ENCODE measurements at regions of chr16 and their contacts with region 1.

Region 1: DNA sequence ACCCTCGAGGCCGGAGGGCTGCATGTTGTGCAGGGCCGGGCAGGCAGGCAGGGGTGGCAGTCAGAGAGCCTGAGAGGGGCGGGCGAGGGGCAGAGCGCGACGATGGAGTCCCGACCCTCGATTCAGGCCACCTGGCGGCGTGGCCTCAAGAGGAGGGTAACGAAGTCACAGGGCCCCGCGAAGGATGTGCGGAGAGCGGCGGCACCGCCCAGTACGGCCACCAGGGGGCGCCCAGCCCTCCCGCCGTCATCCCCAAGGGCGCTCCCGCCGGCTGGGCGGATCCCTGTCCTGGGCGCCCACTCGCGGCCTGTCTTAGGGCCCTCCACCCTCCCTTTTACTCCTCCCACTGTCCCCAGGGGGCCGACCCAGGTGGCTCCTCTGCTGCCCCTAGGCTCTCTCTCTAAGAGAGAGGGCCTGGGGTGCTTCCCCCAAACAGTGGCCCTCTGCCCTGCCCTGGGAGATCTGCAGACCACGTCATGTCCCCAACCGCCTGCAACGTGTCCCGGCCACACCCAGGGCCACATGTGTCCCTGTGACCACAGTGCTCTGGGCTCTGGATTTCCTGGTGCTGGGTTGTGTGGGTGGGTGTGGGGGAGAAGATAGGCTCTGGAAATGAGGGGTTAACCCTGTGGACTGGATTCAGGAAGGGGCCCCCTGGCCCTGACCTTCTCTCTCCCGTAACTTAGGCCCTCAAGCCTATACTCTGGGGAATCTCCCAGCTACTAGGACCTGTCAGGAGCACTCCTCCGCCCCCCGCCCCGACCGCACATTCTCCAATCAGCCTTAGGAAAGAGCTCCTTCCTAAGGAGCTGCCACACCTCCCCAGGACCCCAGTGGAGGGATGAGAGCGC is 5.9 kb downstream of the DPEP2 start:
- DNase-seq: peak; percentile 84 to 88
- ATAC-seq: peak; percentile 91 to 96 (median 95)
- H3K4me3 ChIP-seq: peak overlapping the region in 9 of 10 donors; percentile 5 to 55 (median 45)
- H3K27ac ChIP-seq: peak overlapping the region; percentile 70 to 93 (median 80)
- H3K4me1 ChIP-seq: peaks cover 4 to 33% (median 13%) of the 10 kb centered on the region in 9 donors
- H3K27me3 ChIP-seq: no peaks in the 10 kb centered on the region
- CTCF ChIP-seq: peak; percentile 98 to 100 (median 99)

Region 2: DNA sequence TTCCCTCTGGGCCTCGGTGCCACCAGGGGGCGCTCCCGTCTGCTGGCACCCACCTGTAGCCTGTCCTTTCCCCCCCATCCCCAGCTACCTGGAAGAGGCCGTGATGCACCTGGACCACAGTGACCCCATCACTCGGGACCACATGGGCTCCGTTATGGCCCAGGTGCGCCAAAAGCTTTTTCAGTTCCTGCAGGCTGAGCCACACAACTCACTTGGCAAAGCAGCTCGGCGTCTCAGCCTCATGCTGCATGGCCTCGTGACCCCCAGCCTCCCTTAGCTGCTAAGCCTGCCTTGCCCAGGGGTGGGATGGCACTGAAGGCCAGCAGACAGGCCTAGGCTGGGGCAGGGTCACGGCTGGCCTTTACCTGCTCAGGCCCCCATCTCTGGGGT is 109.5 kb before region 1 on chr16:
- intact Hi-C with region 1: no loop called
- DNase-seq: peak; percentile 36 to 70
- ATAC-seq: peak in 7 of 8 donors; percentile 27 to 75 (median 48)
- H3K4me3 ChIP-seq: no peak overlapping the region
- H3K27ac ChIP-seq: peak overlapping the region in 7 of 10 donors; percentile 18 to 91 (median 80)
- H3K4me1 ChIP-seq: peaks cover 19 to 55% (median 25%) of the 10 kb centered on the region in 9 donors
- H3K27me3 ChIP-seq: no peaks in the 10 kb centered on the region
- CTCF ChIP-seq: peak; percentile 17 to 91 (median 87)

Region 3: GRCh38 chr16:67935402-67936123 is 57.9 kb before region 1 on chr16:
- intact Hi-C with region 1: loop called in 1 of 10 experiments (anchors 5 kb)
- DNase-seq: peak; percentile 92 to 94
- ATAC-seq: peak; percentile 90 to 95 (median 92)
- H3K4me3 ChIP-seq: peak overlapping the region; percentile 70 to 96 (median 86)
- H3K27ac ChIP-seq: peak overlapping the region; percentile 70 to 98 (median 95)
- H3K4me1 ChIP-seq: peaks cover 4 to 40% (median 33%) of the 10 kb centered on the region in 9 donors
- H3K27me3 ChIP-seq: no peaks in the 10 kb centered on the region
- CTCF ChIP-seq: peak in 1 of 9 donors; percentile 5

Region 4: GRCh38 chr16:68005786-68006286 is 12.4 kb after region 1 on chr16:
- intact Hi-C with region 1: no loop called
- DNase-seq: peak in 1 of 2 donors; percentile 33
- ATAC-seq: peak in 7 of 8 donors; percentile 50 to 86 (median 71)
- H3K4me3 ChIP-seq: no peak overlapping the region
- H3K27ac ChIP-seq: peak overlapping the region in 6 of 10 donors; percentile 19 to 93 (median 42)
- H3K4me1 ChIP-seq: peaks cover 0 to 40% (median 0%) of the 10 kb centered on the region in 9 donors
- H3K27me3 ChIP-seq: no peaks in the 10 kb centered on the region
- CTCF ChIP-seq: no peak

Region 5: DNA sequence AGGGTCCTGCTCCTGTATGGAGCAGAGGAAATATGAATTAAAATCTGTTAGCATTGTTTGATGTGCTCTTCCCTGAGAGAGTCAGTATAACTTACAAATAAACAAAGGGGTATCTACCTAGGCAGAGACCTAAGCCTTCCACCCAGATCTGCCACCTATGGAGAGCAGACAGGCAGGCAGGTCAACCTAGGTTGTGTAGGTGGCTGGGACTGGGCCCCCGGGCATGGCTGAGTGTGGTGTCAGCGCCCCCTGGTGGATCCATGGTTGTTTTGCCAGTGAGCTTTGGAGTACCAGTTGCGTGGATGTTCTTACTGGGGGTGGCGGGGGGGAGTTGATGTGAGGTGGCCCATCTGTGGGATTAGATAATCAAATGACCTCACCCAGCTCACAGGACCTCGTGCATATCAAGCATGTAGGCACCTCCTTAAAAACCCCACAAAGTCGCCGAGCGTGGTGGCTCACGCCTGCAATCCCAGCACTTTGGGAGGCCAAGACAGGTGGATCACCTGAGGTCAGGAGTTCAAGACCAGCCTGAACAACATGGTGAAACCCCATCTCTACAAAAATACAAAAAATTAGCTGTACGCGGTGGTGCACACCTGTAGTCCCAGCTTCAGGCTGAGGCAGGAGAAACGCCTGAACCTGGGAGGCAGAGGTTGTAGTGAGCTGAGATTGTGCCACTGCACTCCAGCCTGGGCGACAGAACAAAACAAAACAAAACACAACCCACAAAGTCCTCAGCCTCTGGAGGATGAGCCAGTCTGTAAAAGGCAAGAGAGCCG is 47.3 kb after region 1 on chr16:
- intact Hi-C with region 1: loop called in 5 of 10 experiments (anchors 1 to 5 kb)
- DNase-seq: peak; percentile 83 to 84
- ATAC-seq: peak; percentile 89 to 96 (median 94)
- H3K4me3 ChIP-seq: no peak overlapping the region
- H3K27ac ChIP-seq: peak overlapping the region in 1 of 10 donors; percentile 69
- H3K4me1 ChIP-seq: peaks cover 0 to 45% (median 0%) of the 10 kb centered on the region in 9 donors
- H3K27me3 ChIP-seq: no peaks in the 10 kb centered on the region
- CTCF ChIP-seq: peak; percentile 73 to 88 (median 83)

Region 6: GRCh38 chr16:68229431-68230198 is 236.2 kb after region 1 on chr16:
- intact Hi-C with region 1: loop called in 6 of 10 experiments (anchors 2 to 10 kb)
- DNase-seq: no peak
- ATAC-seq: peak; percentile 11 to 57 (median 38)
- H3K4me3 ChIP-seq: no peak overlapping the region
- H3K27ac ChIP-seq: peak overlapping the region in 1 of 10 donors; percentile 43
- H3K4me1 ChIP-seq: peaks cover 3 to 33% (median 23%) of the 10 kb centered on the region in 9 donors
- H3K27me3 ChIP-seq: no peaks in the 10 kb centered on the region
- CTCF ChIP-seq: peak; percentile 85 to 94 (median 91)

Region 7: DNA sequence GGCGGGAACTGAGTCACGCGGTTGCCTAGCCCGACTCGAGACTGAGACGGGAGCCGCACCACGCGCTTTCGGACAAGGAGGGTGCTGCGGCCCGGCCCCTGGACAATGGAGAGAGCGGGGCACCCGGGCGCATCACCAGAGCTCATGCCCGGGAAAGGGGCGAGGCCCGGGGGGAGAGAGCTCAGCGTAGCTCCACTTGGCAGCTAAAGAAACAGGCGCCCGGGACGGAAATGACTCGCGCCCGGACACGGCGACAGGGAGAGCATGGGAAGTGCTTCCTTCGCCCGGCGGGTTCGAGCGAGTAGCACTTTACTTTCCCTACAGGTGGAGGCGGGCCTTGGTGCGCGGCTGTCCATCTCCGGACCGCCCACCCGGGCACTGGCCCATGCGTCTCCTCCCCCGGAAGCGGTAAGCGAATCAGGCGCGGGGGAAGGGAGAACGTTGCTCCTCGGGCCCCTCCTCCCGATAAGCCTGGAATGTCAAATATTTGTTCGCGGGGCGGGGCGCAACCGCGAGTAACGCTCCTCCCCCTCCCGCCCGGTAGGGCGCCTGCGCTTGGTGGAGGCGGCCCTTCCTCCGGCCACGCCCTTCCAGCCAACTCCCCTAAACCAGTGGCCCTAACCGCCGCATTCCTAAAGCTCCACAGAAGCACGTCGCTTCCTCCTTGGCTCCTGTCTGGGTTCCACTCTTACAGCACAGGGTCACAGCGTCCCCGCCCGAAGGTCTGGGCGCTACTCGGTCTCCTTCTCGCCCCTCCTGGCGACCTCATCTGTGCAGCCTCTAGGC is 244.0 kb after region 1 on chr16:
- intact Hi-C with region 1: loop called in 4 of 10 experiments (anchors 5 to 10 kb)
- DNase-seq: peak; percentile 97 to 98
- ATAC-seq: peak; percentile 90 to 96 (median 94)
- H3K4me3 ChIP-seq: peak overlapping the region; percentile 20 to 67 (median 60)
- H3K27ac ChIP-seq: peak overlapping the region; percentile 49 to 94 (median 88)
- H3K4me1 ChIP-seq: peaks cover 9 to 47% (median 30%) of the 10 kb centered on the region in 9 donors
- H3K27me3 ChIP-seq: peaks cover 0 to 16% (median 0%) of the 10 kb centered on the region in 7 donors
- CTCF ChIP-seq: peak in 2 of 9 donors; percentile 2 to 6